MCF 10A (cell line): ENCODE measurements at regions of chr10 and their contacts with region 1.

Region 1: GRCh38 chr10:122126763-122127659 is 138.0 kb downstream of the TACC2 start:
- DNase-seq: peak; percentile 92
- H3K4me3 Mint-ChIP-seq: peak overlapping the region; percentile 80
- H3K27ac Mint-ChIP-seq: peak overlapping the region; percentile 89
- H3K4me1 Mint-ChIP-seq: peaks cover 30% of the 10 kb centered on the region
- H3K27me3 Mint-ChIP-seq: no peaks in the 10 kb centered on the region
- CTCF ChIP-seq: no peak

Region 2: GRCh38 chr10:121974535-121975294 is 152.3 kb before region 1 on chr10 and contains the start of gene NSMCE4A:
- CTCF ChIA-PET with region 1: interaction called, 3 read pairs
- POLR2A ChIA-PET with region 1: interaction called, 6 read pairs
- intact Hi-C with region 1: loop called (anchors 5 kb)
- DNase-seq: peak; percentile 63
- H3K4me3 Mint-ChIP-seq: peak within 1 kb of the TSS; percentile 77
- H3K27ac Mint-ChIP-seq: peak within 1 kb of the TSS; percentile 16
- H3K4me1 Mint-ChIP-seq: peaks cover 13% of the 10 kb centered on the region
- H3K27me3 Mint-ChIP-seq: no peaks in the 10 kb centered on the region
- CTCF ChIP-seq: peak; percentile 59
- total RNA-seq, gene NSMCE4A: 24.5 and 30.2 TPM in 2 replicates

Region 3: DNA sequence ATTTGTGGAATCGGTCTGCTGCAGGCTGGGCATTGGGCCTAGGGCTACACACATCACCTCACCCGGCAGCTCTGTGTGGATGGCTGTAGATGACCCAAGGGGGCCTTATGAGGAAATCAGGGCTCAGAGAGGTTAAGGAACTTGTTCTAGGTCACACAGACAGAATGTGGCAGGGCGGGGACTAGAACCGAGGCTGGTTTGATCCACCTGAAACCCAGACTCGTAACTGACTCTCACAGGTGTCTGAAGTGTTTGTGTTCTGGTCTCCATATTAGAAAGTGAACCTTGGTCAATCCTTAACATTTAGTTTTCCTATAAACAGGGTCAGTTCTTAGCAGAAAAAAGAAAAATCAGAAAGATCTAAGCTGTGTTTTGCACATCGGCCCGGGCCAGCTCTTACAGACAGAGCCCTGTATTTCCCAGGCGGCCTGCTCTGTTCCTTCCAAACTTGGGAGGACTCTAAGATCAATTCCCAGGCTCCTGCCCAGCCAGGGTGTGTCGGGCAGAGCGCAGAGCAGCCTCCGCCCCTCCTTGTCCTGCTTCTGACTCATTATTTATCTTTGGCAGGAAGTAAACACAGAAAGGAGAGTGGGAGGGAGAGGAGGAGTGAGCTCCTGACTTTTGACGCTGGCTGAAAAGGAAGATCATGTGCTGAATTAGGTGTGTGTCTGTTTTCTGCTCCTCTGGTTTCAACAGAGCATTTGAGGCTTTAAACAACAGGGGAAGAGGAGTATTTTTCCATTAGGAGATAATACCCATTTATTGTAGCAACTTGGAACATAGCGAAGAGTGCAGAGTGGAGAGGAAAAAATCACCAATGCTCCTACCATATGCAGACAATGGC is 64.0 kb before region 1 on chr10:
- CTCF ChIA-PET with region 1: interaction called, 5 read pairs
- POLR2A ChIA-PET with region 1: interaction called, 12 read pairs
- intact Hi-C with region 1: no loop called
- DNase-seq: peak; percentile 97
- H3K4me3 Mint-ChIP-seq: peak overlapping the region; percentile 20
- H3K27ac Mint-ChIP-seq: peak overlapping the region; percentile 98
- H3K4me1 Mint-ChIP-seq: peaks cover 12% of the 10 kb centered on the region
- H3K27me3 Mint-ChIP-seq: no peaks in the 10 kb centered on the region
- CTCF ChIP-seq: no peak

Region 4: GRCh38 chr10:122098924-122099323 is 28.1 kb before region 1 on chr10:
- CTCF ChIA-PET with region 1: interaction called, 4 read pairs
- POLR2A ChIA-PET with region 1: interaction called, 18 read pairs
- intact Hi-C with region 1: no loop called
- DNase-seq: no peak
- H3K4me3 Mint-ChIP-seq: no peak overlapping the region
- H3K27ac Mint-ChIP-seq: no peak overlapping the region
- H3K4me1 Mint-ChIP-seq: peaks cover 16% of the 10 kb centered on the region
- H3K27me3 Mint-ChIP-seq: no peaks in the 10 kb centered on the region
- CTCF ChIP-seq: no peak

Region 5: DNA sequence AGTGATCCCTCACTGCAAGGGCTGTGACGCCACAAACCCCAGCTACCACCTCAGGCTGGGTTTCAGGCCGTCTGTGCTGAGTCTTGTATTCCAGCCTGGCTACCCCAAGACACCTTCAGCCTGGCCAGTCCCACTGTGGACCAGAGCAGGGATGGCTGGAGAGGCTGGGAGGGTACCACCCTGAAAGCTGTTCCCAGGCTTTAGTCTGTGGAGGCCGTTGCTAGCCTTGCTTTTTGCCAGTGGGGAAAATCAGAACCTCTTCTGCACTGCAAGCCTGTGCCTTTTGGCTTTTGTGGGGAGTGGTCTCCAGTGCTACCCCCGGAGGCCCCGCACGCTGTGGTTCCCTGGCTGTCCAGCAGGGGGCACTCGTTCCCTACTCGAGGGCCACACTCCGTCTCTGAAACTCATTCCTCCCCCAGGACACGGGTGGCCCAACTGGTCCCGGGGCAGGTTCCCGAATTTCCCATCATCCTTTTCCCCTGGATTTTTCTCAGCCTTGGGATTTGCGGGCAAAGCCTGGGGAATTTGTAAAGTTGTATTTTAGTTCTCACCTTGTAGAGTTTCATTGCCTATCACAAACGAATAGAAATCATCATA is 15.7 kb after region 1 on chr10:
- CTCF ChIA-PET with region 1: interaction called, 13 read pairs
- POLR2A ChIA-PET with region 1: interaction called, 49 read pairs
- intact Hi-C with region 1: no loop called
- DNase-seq: no peak
- H3K4me3 Mint-ChIP-seq: no peak overlapping the region
- H3K27ac Mint-ChIP-seq: peak overlapping the region; percentile 59
- H3K4me1 Mint-ChIP-seq: peaks cover 39% of the 10 kb centered on the region
- H3K27me3 Mint-ChIP-seq: no peaks in the 10 kb centered on the region
- CTCF ChIP-seq: peak; percentile 99